CD8-positive, alpha-beta memory T cell (primary cell): ENCODE measurements at regions of chr9 and their contacts with region 1.

Region 1: GRCh38 chr9:124861342-124862229 is at the starts of genes ARPC5L and RPL35:
- DNase-seq: peak; percentile 93 to 96 (median 94)
- H3K4me3 ChIP-seq: peak within 1 kb of the TSS; percentile 88
- H3K4me3 Mint-ChIP-seq: peak within 1 kb of the TSS; percentile 88 to 99 (median 96)
- H3K27ac ChIP-seq: peak within 1 kb of the TSS; percentile 96
- H3K27ac Mint-ChIP-seq: peak within 1 kb of the TSS; percentile 92 to 98 (median 98)
- H3K4me1 ChIP-seq: peaks cover 21% of the 10 kb centered on the region
- H3K4me1 Mint-ChIP-seq: peaks cover 26 to 44% (median 31%) of the 10 kb centered on the region in 3 donors
- H3K27me3 ChIP-seq: no peaks in the 10 kb centered on the region
- H3K27me3 Mint-ChIP-seq: no peaks in the 10 kb centered on the region
- total RNA-seq, gene ARPC5L: 116 to 120 TPM
- total RNA-seq, gene RPL35: 2,023 to 2,058 TPM

Region 2: GRCh38 chr9:124771021-124771866 is 90.3 kb before region 1 on chr9 and contains the start of gene NR6A1:
- CTCF ChIA-PET with region 1: interaction called, 15 read pairs
- POLR2A ChIA-PET with region 1: interaction called, 17 read pairs
- DNase-seq: peak; percentile 91 to 96 (median 93)
- H3K4me3 ChIP-seq: peak within 1 kb of the TSS; percentile 83
- H3K4me3 Mint-ChIP-seq: peak within 1 kb of the TSS; percentile 88 to 96 (median 90)
- H3K27ac ChIP-seq: peak within 1 kb of the TSS; percentile 58
- H3K27ac Mint-ChIP-seq: peak within 1 kb of the TSS; percentile 63 to 96 (median 88)
- H3K4me1 ChIP-seq: peaks cover 25% of the 10 kb centered on the region
- H3K4me1 Mint-ChIP-seq: peaks cover 31 to 50% (median 40%) of the 10 kb centered on the region in 3 donors
- H3K27me3 ChIP-seq: peaks cover 58% of the 10 kb centered on the region
- H3K27me3 Mint-ChIP-seq: peaks cover 52 to 77% of the 10 kb centered on the region in 2 donors
- total RNA-seq, gene NR6A1: 2.4 to 3.0 TPM